ENCODE measurements at regions of chr19 and their contacts with region 1.

Region 1: GRCh38 chr19:40444192-40445028 is at the start of gene SERTAD3:
- DNase-seq: peak; percentile 93 to 98 (median 96)
- ATAC-seq: peak; percentile 66
- H3K4me3 ChIP-seq: peak within 1 kb of the TSS; percentile 75
- H3K4me3 Mint-ChIP-seq: peak within 1 kb of the TSS; percentile 96
- H3K27ac ChIP-seq: peak within 1 kb of the TSS; percentile 81 to 86
- H3K27ac Mint-ChIP-seq: peak within 1 kb of the TSS; percentile 86
- H3K4me1 ChIP-seq: peaks cover 18% of the 10 kb centered on the region
- H3K4me1 Mint-ChIP-seq: peaks cover 18% of the 10 kb centered on the region
- H3K27me3 ChIP-seq: no peaks in the 10 kb centered on the region
- H3K27me3 Mint-ChIP-seq: no peaks in the 10 kb centered on the region
- CTCF ChIP-seq: no peak
- total RNA-seq, gene SERTAD3: 17.4 to 19.2 TPM

Region 2: DNA sequence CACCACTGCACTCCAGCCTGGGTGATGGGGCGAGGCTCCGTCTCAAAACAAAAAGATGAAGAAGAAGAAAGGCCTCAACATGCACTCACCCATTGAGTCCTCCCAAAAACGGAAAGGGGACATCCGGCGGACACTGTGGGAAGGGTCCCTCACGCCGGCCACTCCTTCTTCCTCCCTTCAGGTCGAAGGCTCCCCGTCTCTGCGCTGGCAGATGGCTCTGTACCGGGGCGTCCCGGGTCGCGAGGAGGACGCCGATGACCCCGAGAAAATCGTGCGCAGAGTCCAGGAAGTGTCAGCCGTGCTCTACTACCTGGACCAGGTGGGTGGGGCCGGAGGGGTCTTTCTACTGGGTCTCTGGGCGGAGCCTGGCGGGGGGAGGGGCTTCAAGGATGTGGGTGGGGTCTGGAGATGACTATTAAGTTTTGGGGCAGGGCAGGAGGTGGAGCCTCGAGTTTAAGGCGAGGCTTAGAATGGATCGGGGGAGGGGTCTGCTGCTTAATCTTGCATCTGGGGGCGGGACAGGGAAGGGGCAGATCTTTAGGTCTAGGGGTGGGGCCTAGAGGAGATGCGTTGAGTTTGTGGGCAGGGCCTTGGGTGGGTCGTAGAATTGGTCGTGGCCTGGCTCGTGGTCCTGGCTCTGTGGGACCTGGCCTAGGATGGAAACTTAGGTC is 1916.8 kb before region 1 on chr19:
- CTCF ChIA-PET with region 1: no interaction called
- POLR2A ChIA-PET with region 1: no interaction called
- intact Hi-C with region 1: no loop called
- DNase-seq: peak in 4 of 14 experiments; percentile 11 to 48 (median 26)
- ATAC-seq: peak; percentile 26
- H3K4me3 ChIP-seq: no peak overlapping the region
- H3K4me3 Mint-ChIP-seq: no peak overlapping the region
- H3K27ac ChIP-seq: no peak overlapping the region
- H3K27ac Mint-ChIP-seq: no peak overlapping the region
- H3K4me1 ChIP-seq: peaks cover 5% of the 10 kb centered on the region
- H3K4me1 Mint-ChIP-seq: no peaks in the 10 kb centered on the region
- H3K27me3 ChIP-seq: peaks cover 0 to 3% of the 10 kb centered on the region in 2 experiments
- H3K27me3 Mint-ChIP-seq: no peaks in the 10 kb centered on the region
- CTCF ChIP-seq: no peak

Region 3: DNA sequence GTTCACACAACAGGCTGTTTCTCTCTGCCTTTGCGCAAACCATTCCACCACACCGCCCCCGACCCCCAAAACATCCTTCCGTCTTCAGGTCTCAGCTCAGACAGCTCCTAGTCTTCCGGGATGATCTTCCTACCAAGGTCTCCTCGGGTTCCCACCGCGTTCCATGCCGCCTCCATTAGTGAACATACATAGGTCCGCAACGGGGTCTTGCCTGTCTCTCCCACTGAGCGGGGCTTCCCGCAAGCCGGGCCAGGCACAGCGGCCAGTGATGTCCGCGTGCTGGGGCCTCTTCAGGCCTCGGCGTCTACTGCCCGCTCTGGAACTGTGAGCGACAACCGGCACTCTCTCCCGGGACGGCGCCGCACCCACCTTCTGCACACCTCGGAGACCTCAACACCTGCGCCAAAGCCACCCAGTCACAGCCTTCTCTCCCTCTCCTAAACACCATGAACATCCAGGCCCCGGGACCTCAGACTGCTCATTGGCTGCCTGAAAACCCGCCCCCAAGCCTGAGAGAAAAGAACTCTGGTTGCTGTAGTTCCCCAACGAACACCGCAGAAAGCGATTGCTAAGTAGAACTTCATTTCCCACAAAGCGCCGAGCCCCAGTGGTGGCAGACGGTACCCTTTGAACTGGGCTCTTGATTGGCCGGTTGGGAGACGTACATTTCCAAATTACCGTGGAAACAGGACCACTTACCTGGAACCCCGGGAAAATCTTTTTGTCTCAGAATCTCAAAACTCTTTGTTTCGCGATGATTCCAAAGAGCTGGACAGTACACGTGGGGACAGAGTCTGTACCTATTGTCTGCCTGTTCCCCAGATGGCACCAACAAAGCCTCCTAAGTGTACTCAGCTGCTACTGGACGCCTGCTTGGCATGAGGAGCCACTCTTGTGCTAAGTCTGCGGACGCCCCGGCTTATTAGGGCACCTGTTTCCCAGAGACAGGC is 620.0 kb before region 1 on chr19:
- CTCF ChIA-PET with region 1: no interaction called
- POLR2A ChIA-PET with region 1: no interaction called
- intact Hi-C with region 1: loop called in 1 of 2 experiments (anchors 10 kb)
- DNase-seq: peak; percentile 75 to 94 (median 82)
- ATAC-seq: peak; percentile 99
- H3K4me3 ChIP-seq: peak overlapping the region; percentile 94
- H3K4me3 Mint-ChIP-seq: no peak overlapping the region
- H3K27ac ChIP-seq: peak overlapping the region; percentile 29 to 55
- H3K27ac Mint-ChIP-seq: no peak overlapping the region
- H3K4me1 ChIP-seq: peaks cover 40% of the 10 kb centered on the region
- H3K4me1 Mint-ChIP-seq: no peaks in the 10 kb centered on the region
- H3K27me3 ChIP-seq: no peaks in the 10 kb centered on the region
- H3K27me3 Mint-ChIP-seq: no peaks in the 10 kb centered on the region
- CTCF ChIP-seq: no peak

Region 4: GRCh38 chr19:40190891-40191835 is 253.2 kb before region 1 on chr19 and contains the start of gene MAP3K10:
- CTCF ChIA-PET with region 1: no interaction called
- POLR2A ChIA-PET with region 1: no interaction called
- intact Hi-C with region 1: no loop called
- DNase-seq: peak; percentile 37 to 85 (median 68)
- ATAC-seq: peak; percentile 81
- H3K4me3 ChIP-seq: peak within 1 kb of the TSS; percentile 98
- H3K4me3 Mint-ChIP-seq: peak within 1 kb of the TSS; percentile 95
- H3K27ac ChIP-seq: peak within 1 kb of the TSS; percentile 83 to 89
- H3K27ac Mint-ChIP-seq: peak within 1 kb of the TSS; percentile 88
- H3K4me1 ChIP-seq: peaks cover 31% of the 10 kb centered on the region
- H3K4me1 Mint-ChIP-seq: peaks cover 45% of the 10 kb centered on the region
- H3K27me3 ChIP-seq: no peaks in the 10 kb centered on the region
- H3K27me3 Mint-ChIP-seq: no peaks in the 10 kb centered on the region
- CTCF ChIP-seq: no peak
- total RNA-seq, gene MAP3K10: 20.8 to 21.7 TPM

Region 5: DNA sequence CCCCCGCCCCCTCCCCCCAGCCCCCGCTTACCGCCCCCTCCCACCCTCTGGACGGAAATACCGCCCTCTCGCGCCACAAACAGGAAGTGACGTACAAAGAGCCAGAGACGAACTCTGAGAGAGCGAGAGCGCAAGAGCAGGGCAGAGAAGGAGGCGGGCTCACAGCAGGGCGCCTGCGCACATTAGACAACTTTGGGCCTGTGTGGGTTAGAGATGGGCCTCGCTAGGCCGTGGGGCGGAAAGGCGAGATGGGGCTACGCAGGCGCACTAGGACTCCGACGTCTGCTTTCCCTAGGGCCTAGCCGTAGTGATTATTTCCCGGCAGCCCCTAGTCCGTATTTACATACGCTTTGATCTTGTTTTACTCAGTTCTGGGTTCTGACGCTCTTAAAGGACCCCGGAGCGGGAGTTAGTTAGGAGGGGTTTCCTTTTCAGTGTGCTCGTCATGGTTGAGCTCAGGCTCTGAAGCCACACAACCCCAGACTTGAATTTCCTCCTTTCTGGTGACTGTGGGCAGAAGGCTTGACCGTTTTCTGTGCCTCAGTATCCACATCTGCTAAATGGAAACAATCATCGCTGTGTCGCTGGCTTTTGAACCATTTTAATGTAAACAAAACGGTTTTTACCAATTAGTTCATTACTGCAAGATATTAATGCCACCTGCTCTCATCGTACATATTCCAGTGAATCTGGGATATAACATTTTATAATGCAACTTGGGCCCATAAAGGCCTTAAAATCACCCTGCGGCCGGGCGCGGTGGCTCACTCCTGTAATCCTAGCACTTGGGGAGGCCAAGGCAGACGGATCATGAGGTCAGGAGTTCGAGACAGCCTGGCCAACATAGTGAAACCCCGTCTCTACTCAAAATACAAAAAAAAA is 158.8 kb before region 1 on chr19:
- CTCF ChIA-PET with region 1: no interaction called
- POLR2A ChIA-PET with region 1: interaction called, 5 read pairs
- intact Hi-C with region 1: loop called (anchors 5 to 10 kb)
- DNase-seq: peak; percentile 94 to 100 (median 98)
- ATAC-seq: peak; percentile 75
- H3K4me3 ChIP-seq: peak overlapping the region; percentile 68
- H3K4me3 Mint-ChIP-seq: peak overlapping the region; percentile 89
- H3K27ac ChIP-seq: peak overlapping the region; percentile 78 to 90
- H3K27ac Mint-ChIP-seq: peak overlapping the region; percentile 93
- H3K4me1 ChIP-seq: peaks cover 52% of the 10 kb centered on the region
- H3K4me1 Mint-ChIP-seq: peaks cover 46% of the 10 kb centered on the region
- H3K27me3 ChIP-seq: no peaks in the 10 kb centered on the region
- H3K27me3 Mint-ChIP-seq: no peaks in the 10 kb centered on the region
- CTCF ChIP-seq: no peak

Region 6: GRCh38 chr19:40403262-40403984 is 41.0 kb before region 1 on chr19:
- CTCF ChIA-PET with region 1: interaction called, 3 read pairs
- POLR2A ChIA-PET with region 1: interaction called, 15 read pairs
- intact Hi-C with region 1: loop called in 1 of 2 experiments (anchors 5 kb)
- DNase-seq: peak; percentile 46 to 89 (median 70)
- ATAC-seq: peak; percentile 45
- H3K4me3 ChIP-seq: peak overlapping the region; percentile 88
- H3K4me3 Mint-ChIP-seq: peak overlapping the region; percentile 94
- H3K27ac ChIP-seq: peak overlapping the region; percentile 22 to 56
- H3K27ac Mint-ChIP-seq: peak overlapping the region; percentile 64
- H3K4me1 ChIP-seq: peaks cover 34% of the 10 kb centered on the region
- H3K4me1 Mint-ChIP-seq: peaks cover 35% of the 10 kb centered on the region
- H3K27me3 ChIP-seq: no peaks in the 10 kb centered on the region
- H3K27me3 Mint-ChIP-seq: no peaks in the 10 kb centered on the region
- CTCF ChIP-seq: no peak

Region 7: GRCh38 chr19:40433391-40434216 is 10.8 kb before region 1 on chr19:
- CTCF ChIA-PET with region 1: interaction called, 3 read pairs
- POLR2A ChIA-PET with region 1: interaction called, 23 read pairs
- intact Hi-C with region 1: no loop called
- DNase-seq: peak; percentile 22 to 78 (median 48)
- ATAC-seq: peak; percentile 88
- H3K4me3 ChIP-seq: peak overlapping the region; percentile 50
- H3K4me3 Mint-ChIP-seq: peak overlapping the region; percentile 95
- H3K27ac ChIP-seq: peak overlapping the region; percentile 56 to 58
- H3K27ac Mint-ChIP-seq: peak overlapping the region; percentile 93
- H3K4me1 ChIP-seq: peaks cover 15% of the 10 kb centered on the region
- H3K4me1 Mint-ChIP-seq: peaks cover 14% of the 10 kb centered on the region
- H3K27me3 ChIP-seq: no peaks in the 10 kb centered on the region
- H3K27me3 Mint-ChIP-seq: no peaks in the 10 kb centered on the region
- CTCF ChIP-seq: no peak

Region 8: GRCh38 chr19:40465557-40466150 is 21.2 kb after region 1 on chr19 and contains the start of gene BLVRB:
- CTCF ChIA-PET with region 1: interaction called, 5 read pairs
- POLR2A ChIA-PET with region 1: interaction called, 28 read pairs
- intact Hi-C with region 1: loop called (anchors 1 kb)
- DNase-seq: peak; percentile 98 to 100 (median 100)
- ATAC-seq: peak; percentile 81
- H3K4me3 ChIP-seq: peak within 1 kb of the TSS; percentile 81
- H3K4me3 Mint-ChIP-seq: peak within 1 kb of the TSS; percentile 93
- H3K27ac ChIP-seq: peak within 1 kb of the TSS; percentile 13 to 62
- H3K27ac Mint-ChIP-seq: peak within 1 kb of the TSS; percentile 87
- H3K4me1 ChIP-seq: peaks cover 35% of the 10 kb centered on the region
- H3K4me1 Mint-ChIP-seq: peaks cover 30% of the 10 kb centered on the region
- H3K27me3 ChIP-seq: peaks cover 0 to 16% of the 10 kb centered on the region in 2 experiments
- H3K27me3 Mint-ChIP-seq: peaks cover 25% of the 10 kb centered on the region
- CTCF ChIP-seq: no peak
- total RNA-seq, gene BLVRB: 4.3 to 5.2 TPM

Region 9: DNA sequence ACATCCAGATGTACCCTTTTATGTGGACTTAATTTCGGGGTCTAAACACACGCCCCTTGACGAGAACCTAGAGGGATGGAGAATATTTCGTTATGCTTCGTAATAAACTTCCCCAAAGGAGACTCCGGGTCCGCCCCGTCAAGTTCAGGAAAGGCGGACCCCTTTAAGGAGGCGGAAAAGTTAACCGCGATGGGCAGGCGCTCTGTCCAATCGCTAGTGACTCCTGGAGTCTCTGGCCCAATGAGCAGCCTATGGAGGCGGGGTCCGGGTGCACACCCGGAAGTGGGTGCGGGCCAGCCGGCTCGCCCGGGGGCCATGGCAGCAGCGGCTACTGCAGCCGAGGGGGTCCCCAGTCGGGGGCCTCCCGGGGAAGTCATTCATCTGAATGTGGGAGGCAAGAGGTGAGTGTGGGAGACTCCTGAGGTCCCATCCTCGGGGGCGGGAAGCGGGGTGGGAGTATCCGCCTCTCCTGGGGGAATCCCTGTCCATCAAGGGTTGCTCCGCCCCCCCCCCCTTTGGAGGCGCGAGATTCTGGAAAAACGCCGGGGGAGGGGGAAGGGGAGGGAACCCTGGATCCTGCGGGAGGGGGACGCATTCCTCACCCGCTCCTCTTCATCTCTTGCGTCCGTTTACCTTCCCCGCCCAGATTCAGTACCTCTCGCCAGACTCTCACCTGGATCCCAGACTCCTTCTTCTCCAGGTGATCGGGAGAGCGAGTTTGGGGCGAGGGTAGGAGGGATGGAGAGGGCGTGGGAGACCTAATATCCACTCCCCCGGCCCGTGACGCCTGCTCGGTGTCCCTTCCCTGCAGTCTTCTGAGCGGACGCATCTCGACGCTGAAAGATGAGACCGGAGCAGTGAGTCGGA is 132.4 kb after region 1 on chr19 and contains the start of gene SHKBP1:
- CTCF ChIA-PET with region 1: no interaction called
- POLR2A ChIA-PET with region 1: no interaction called
- intact Hi-C with region 1: loop called in 1 of 2 experiments (anchors 5 kb)
- DNase-seq: peak; percentile 84 to 96 (median 90)
- ATAC-seq: peak; percentile 99
- H3K4me3 ChIP-seq: peak within 1 kb of the TSS; percentile 97
- H3K4me3 Mint-ChIP-seq: peak within 1 kb of the TSS; percentile 94
- H3K27ac ChIP-seq: peak within 1 kb of the TSS; percentile 60 to 64
- H3K27ac Mint-ChIP-seq: peak within 1 kb of the TSS; percentile 83
- H3K4me1 ChIP-seq: peaks cover 37% of the 10 kb centered on the region
- H3K4me1 Mint-ChIP-seq: peaks cover 33% of the 10 kb centered on the region
- H3K27me3 ChIP-seq: no peaks in the 10 kb centered on the region
- H3K27me3 Mint-ChIP-seq: no peaks in the 10 kb centered on the region
- CTCF ChIP-seq: no peak
- total RNA-seq, gene SHKBP1: 82.5 to 92.9 TPM